A673 (cell line): ENCODE measurements at regions of chr9 and their contacts with region 1.

Region 1: GRCh38 chr9:121213136-121213806 is 11.6 kb upstream of the RAB14 start:
- DNase-seq: peak; percentile 90
- H3K4me3 ChIP-seq: no peak overlapping the region
- H3K27ac ChIP-seq: no peak overlapping the region
- H3K4me1 ChIP-seq: peaks cover 2% of the 10 kb centered on the region
- H3K27me3 ChIP-seq: no peaks in the 10 kb centered on the region
- CTCF ChIP-seq: peak; percentile 98

Region 2: DNA sequence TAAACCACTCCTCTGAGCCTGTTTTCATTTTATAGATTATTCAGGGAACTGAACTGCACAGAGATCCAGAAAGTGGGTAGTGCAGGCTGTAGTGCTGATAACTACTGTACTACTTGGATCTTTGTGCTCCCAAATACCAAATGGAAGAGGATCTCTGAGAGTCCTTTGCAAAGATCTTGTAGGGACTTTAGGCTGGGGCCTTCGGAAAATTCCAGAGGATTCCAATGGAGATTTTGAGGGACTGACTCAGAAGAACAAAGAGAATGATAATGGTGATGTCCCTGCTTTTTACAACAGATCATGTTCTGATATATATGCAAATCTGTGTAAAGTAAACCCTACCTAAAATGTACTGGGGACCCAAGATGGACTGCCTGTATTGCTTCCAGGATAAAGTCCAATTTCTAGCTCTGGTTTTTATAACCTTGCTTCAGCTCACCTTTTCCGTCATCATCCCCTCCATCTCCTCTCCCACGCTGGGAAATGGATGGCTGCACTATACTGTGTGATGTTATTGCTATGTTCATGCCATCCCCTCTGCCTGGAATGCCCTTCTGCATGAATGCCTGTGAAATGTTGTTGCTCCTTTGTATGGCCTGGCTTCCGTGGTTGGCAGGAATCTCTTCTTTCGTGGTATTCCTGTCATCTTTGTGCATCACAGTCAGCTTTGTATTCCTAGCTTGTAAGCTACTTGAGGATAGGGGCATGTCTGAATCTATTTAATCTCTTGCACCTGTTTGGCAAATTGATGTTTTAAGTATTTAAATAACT is 360.8 kb before region 1 on chr9:
- CTCF ChIA-PET with region 1: no interaction called
- POLR2A ChIA-PET with region 1: no interaction called
- intact Hi-C with region 1: no loop called
- DNase-seq: no peak
- H3K4me3 ChIP-seq: no peak overlapping the region
- H3K27ac ChIP-seq: no peak overlapping the region
- H3K4me1 ChIP-seq: no peaks in the 10 kb centered on the region
- H3K27me3 ChIP-seq: no peaks in the 10 kb centered on the region
- CTCF ChIP-seq: no peak

Region 3: DNA sequence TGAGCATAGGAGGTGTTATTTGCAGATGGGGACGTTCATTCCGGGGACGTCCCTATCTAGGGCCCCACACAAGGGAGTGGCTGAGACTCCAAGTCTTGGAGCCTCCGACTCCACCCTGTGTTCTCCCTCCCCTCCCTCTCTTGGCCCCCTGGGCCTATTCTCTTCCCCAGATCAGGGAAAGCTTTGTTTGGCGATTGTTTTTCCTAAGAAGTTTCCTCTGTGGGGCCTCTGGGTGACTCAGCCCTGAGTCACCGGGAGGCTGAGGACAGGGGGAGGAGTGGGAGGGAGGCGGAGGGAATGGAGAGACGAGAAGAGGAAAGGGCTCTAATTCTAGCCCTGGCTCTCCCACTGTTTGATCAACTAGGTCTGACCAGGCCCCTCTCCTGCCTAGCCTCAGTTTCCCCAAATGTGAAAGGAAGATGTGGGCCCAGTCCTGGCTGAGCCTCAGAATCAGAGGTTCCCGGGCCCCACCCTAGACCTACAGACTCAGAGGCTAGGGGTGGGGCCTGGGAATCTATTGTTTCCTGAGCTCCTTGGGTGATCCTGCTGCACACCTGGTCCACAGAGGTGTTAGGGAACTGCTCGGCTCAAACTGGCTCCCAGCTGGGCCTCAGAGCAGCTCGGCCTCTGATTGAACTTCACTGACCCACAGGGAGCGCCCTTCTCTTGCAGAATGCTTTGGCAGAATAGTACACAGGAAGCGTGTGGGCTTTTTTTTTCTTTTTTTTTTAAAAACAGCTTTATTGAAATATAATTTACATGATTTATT is 73.9 kb after region 1 on chr9:
- CTCF ChIA-PET with region 1: no interaction called
- POLR2A ChIA-PET with region 1: no interaction called
- intact Hi-C with region 1: loop called (anchors 5 kb)
- DNase-seq: peak; percentile 99
- H3K4me3 ChIP-seq: peak overlapping the region; percentile 7
- H3K27ac ChIP-seq: peak overlapping the region; percentile 89
- H3K4me1 ChIP-seq: peaks cover 84% of the 10 kb centered on the region
- H3K27me3 ChIP-seq: no peaks in the 10 kb centered on the region
- CTCF ChIP-seq: peak; percentile 36; the same call in 1 of the 2 replicates

Region 4: DNA sequence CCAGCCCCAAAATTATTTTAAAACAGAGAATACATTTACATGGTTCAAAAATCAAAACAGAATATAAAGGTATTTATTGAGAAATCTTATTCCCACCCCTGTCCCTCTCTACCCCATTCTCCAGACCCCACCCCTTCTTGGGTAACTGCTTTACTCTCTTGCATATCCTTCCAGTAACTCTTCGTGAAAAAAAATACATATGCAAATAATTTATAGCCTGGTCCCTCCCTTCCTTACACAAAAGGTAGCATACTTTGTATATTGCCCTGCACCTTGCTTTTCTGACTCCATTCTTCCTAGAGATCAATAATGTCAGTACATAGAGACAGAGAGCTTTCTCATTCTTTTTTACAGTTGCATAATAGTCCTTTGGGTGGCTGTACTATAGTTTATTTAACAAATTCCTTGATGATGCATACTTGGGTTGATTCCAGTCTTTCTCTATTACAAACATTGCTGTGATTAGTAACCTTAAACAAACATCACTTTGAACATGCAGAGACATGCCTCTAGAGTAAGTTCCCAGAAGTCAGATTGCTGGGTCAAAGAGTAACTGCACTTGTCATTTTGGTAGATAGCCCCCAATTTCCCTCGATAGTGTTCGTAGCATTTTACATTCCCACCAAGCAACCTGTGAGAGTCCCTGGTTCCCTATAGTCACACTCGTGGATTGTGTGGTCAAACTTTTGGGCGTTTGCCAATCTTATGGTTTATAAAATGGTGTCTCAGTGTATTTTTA is 108.9 kb after region 1 on chr9:
- CTCF ChIA-PET with region 1: interaction called, 3 read pairs
- POLR2A ChIA-PET with region 1: no interaction called
- intact Hi-C with region 1: loop called (anchors 2 kb)
- DNase-seq: no peak
- H3K4me3 ChIP-seq: no peak overlapping the region
- H3K27ac ChIP-seq: no peak overlapping the region
- H3K4me1 ChIP-seq: no peaks in the 10 kb centered on the region
- H3K27me3 ChIP-seq: no peaks in the 10 kb centered on the region
- CTCF ChIP-seq: no peak

Region 5: GRCh38 chr9:121376214-121376830 is 163.1 kb after region 1 on chr9:
- CTCF ChIA-PET with region 1: no interaction called
- POLR2A ChIA-PET with region 1: no interaction called
- intact Hi-C with region 1: loop called (anchors 2 kb)
- DNase-seq: peak; percentile 36
- H3K4me3 ChIP-seq: no peak overlapping the region
- H3K27ac ChIP-seq: no peak overlapping the region
- H3K4me1 ChIP-seq: peaks cover 21% of the 10 kb centered on the region
- H3K27me3 ChIP-seq: no peaks in the 10 kb centered on the region
- CTCF ChIP-seq: peak; percentile 59

Region 6: DNA sequence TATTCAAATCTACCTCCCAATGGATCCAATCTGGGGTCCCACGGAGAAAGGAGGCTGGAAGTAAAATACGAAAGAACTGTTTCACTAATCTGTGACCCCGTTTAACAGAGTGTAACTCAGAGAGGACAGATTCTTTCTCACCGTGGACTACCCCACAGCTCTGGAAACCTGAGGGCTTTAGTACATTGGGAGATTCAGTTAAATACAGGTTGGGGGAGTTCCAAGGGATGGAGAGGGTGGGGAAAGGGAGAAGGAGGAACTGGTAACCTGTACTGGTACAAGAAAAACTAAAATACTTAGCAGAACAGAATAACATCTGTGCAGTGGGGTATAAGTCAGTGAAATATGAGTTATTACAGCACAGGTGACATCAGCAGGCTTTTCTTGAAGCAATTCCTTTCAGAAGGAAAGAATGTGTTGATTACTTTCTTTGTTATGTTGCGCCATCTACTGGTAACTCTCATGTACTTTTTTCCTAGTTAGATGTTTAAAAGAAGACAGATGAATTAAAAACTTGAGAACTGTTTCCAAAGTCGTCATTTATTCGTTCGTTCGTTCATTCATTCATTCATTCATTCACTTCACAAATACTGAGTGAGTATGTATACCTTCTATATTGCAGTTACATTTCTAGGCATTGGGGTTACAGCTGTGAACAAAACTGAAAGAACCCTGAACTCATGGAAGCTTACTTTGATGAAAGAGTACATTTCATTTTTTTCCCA is 186.8 kb after region 1 on chr9:
- CTCF ChIA-PET with region 1: no interaction called
- POLR2A ChIA-PET with region 1: no interaction called
- intact Hi-C with region 1: loop called (anchors 1 kb)
- DNase-seq: peak; percentile 80
- H3K4me3 ChIP-seq: no peak overlapping the region
- H3K27ac ChIP-seq: no peak overlapping the region
- H3K4me1 ChIP-seq: no peaks in the 10 kb centered on the region
- H3K27me3 ChIP-seq: no peaks in the 10 kb centered on the region
- CTCF ChIP-seq: peak; percentile 70

Region 7: DNA sequence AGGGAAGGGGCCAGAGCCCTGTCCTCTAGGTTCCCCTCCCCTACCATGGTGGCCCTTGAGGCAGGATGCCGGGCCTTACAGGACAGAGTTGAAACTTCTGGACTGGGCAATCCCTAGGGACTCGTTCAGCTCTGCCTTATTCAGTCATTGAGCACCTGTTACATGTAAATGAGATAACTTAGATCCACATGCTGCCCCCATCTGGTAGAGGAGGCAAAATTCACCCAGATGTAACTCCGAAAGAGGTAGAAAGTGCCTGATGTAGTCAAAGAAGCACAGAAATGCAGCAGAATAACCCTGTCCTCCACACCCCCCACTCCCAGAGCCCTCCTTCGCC is 284.8 kb after region 1 on chr9:
- CTCF ChIA-PET with region 1: no interaction called
- POLR2A ChIA-PET with region 1: no interaction called
- intact Hi-C with region 1: loop called (anchors 5 kb)
- DNase-seq: peak; percentile 91
- H3K4me3 ChIP-seq: peak overlapping the region; percentile 49
- H3K27ac ChIP-seq: no peak overlapping the region
- H3K4me1 ChIP-seq: peaks cover 13% of the 10 kb centered on the region
- H3K27me3 ChIP-seq: peaks cover 23% of the 10 kb centered on the region
- CTCF ChIP-seq: peak; percentile 84